Mammary epithelial cell (primary cell): ENCODE measurements at regions of chr15 and their contacts with region 1.

Region 1: GRCh38 chr15:72009222-72009621 is 108.7 kb downstream of the MYO9A start:
- DNase-seq: no peak
- H3K4me3 ChIP-seq: no peak overlapping the region
- H3K27ac ChIP-seq: no peak overlapping the region
- H3K4me1 ChIP-seq: no peaks in the 10 kb centered on the region
- H3K27me3 ChIP-seq: no peaks in the 10 kb centered on the region
- CTCF ChIP-seq: no peak

Region 2: GRCh38 chr15:72085979-72086697 is 76.9 kb after region 1 on chr15:
- CTCF ChIA-PET with region 1: interaction called, 12 read pairs
- dilution Hi-C with region 1: no loop called
- in situ Hi-C with region 1: no loop called
- intact Hi-C with region 1: no loop called
- DNase-seq: no peak
- H3K4me3 ChIP-seq: no peak overlapping the region
- H3K27ac ChIP-seq: no peak overlapping the region
- H3K4me1 ChIP-seq: no peaks in the 10 kb centered on the region
- H3K27me3 ChIP-seq: no peaks in the 10 kb centered on the region
- CTCF ChIP-seq: no peak